Sciatic nerve (tissue), 2 donors: ENCODE measurements at regions of chr5 and their contacts with region 1.

Region 1: DNA sequence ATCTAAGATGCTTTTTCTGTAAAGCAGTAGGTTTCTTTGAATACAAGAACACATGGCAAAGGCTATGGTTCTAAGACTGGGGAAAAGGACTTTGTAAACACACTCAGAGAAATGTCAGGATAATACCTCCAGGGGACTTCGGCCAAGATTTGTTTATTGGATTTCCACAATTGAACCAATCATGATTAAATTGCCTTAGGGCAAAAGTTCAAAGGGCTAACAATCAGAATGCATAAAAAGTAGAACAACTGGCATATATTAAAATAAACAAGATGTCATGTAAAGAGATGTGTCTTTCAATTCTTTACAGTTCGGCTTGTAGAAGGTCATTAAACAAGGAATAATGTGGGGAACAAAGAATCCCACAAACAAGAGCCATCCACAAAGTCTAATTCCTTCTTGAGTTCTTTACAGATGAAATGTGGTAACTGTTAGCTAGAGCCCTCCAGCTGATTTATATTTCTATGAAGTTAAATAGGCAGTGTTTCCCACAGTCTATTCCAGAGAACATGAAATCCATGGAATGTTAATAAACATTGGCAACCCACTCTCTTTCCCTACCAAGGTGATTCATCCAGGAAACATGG is 565.5 kb downstream of the ZNF608 start:
- DNase-seq: no peak
- ATAC-seq: no peak

Region 2: DNA sequence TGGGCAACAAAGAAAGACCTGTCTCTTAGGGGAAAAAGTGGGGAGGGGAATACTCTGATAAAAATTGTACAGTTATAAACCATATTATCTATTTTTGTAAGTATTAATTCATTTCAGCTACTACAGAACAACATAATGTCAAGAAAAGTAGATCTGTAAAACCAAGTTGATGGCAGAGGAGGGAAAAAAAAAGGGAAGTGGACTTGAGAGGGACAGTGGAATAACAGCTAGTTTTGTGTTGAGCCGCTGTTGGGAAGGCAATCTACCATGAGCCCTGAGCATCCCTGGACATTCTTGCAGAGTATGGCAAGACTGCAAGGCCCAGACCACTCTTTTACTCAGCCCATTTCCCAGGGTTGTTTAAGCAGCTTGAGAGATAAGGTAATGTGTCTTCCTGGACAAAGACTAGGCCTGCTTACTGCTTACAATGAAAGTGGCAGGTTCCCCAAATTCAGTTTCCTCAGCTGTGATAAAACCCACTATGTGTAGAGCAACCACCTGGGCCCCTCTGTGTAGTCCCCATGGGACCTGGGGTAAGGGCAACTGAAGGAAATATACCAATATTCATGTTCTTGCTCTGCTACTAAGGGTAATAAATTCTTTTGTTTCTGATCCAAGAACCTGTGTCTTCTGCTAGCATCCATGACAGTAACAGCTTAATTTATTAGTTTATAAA is 782.8 kb before region 1 on chr5:
- intact Hi-C with region 1: loop called (anchors 10 kb)
- DNase-seq: no peak
- ATAC-seq: no peak